ENCODE measurements at regions of chr17 and their contacts with region 1.

Region 1: DNA sequence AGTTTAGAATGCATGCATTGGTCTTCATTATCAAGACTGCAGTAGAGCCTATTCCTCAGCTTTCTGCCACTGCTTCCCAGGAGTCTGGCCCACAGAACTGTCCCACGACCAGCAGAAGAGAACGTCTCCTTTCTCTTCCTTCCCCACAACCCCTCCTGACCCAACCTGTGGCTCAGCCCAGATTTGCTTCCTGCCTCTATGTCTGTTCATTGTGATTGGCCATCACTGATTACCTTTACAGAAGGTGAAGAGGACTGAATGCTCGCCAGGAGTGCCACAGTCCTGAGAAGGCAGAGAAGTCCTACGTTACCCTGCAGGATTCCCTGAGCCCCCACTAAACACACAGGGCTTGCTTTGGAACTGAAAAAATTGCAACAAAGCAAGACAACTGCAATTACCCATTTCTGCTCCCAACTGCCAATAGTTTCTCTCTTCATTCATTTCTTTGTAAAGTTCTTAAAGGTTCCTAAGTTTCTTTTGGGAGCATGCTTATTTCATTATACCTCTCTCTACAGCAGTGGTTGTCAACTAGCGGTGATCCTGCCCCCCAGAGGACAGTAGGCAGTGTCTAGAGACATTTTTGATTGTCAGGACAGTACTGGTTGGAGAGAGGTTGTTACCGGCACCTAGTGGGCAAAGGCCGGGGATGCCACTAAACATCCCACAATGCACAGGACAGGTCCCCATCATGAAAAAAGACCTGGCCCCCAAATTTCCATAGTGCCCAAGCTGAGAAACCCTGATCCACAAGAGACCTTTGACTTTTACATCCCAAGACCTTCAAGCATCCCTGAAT is 4.5 kb upstream of the NAT9 start:
- DNase-seq: no peak
- H3K4me3 ChIP-seq: no peak overlapping the region
- H3K27ac ChIP-seq: no peak overlapping the region
- H3K4me1 ChIP-seq: peaks cover 13% of the 10 kb centered on the region
- H3K27me3 ChIP-seq: no peaks in the 10 kb centered on the region
- CTCF ChIP-seq: no peak
- POLR2A ChIP-seq: no peak

Region 2: GRCh38 chr17:74748529-74749365 is 31.9 kb before region 1 on chr17 and contains the start of gene NHERF1:
- intact Hi-C with region 1: loop called (anchors 5 kb)
- DNase-seq: no peak
- H3K4me3 ChIP-seq: peak within 1 kb of the TSS; percentile 62 to 98
- H3K27ac ChIP-seq: peak within 1 kb of the TSS; percentile 86
- H3K4me1 ChIP-seq: peaks cover 67% of the 10 kb centered on the region
- H3K27me3 ChIP-seq: no peaks in the 10 kb centered on the region
- CTCF ChIP-seq: no peak
- POLR2A ChIP-seq: peak in 1 of 2 donors; percentile 93
- total RNA-seq, gene NHERF1: 57.2 TPM

Region 3: GRCh38 chr17:74795327-74796020 is 14.8 kb after region 1 on chr17:
- intact Hi-C with region 1: no loop called
- DNase-seq: no peak
- H3K4me3 ChIP-seq: no peak overlapping the region
- H3K27ac ChIP-seq: no peak overlapping the region
- H3K4me1 ChIP-seq: no peaks in the 10 kb centered on the region
- H3K27me3 ChIP-seq: no peaks in the 10 kb centered on the region
- CTCF ChIP-seq: no peak
- POLR2A ChIP-seq: no peak

Region 4: DNA sequence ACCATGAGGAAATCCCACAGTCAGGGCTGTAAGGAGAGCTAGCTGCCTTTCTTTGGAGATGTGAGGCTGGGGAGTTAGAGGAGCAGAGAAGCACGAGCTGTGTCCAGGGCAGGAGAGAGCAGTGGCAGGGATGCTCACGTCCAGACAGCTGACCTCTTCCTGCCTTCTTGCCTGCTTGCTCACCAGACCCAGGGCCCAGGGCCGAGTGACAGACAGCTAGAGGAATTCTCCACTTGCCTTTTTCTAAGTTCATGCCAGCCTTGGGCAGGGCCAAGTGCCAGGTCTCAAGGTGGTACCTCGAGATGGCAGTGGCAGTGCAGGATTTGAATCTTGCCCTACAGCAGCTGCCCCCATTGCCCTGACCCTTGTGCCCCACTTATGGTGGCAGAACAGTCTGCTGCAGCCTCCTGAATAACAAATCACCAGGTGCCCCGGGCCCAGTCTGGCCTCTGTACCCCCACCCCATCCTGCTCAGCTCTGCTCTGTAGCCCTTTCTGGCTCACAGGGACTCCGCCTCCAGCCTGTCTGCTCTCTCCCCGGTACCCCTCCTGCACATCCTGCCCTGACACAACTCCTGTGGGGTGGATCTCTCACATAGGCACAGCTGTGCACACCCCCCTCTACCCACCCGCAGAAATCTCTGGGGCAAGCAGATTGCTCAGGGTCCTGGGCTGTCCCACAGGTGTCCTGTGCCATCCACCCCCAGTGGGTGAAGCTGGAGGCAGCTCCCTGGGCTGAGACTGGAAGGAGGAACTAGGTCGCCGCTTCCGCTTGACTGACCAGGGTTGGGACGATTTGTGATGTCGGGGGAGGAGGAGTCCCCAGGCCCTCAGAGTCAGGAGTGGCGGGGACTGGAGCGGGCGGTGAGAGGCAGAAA is 53.1 kb after region 1 on chr17:
- intact Hi-C with region 1: no loop called
- DNase-seq: no peak
- H3K4me3 ChIP-seq: no peak overlapping the region
- H3K27ac ChIP-seq: no peak overlapping the region
- H3K4me1 ChIP-seq: no peaks in the 10 kb centered on the region
- H3K27me3 ChIP-seq: no peaks in the 10 kb centered on the region
- CTCF ChIP-seq: no peak
- POLR2A ChIP-seq: no peak

Region 5: DNA sequence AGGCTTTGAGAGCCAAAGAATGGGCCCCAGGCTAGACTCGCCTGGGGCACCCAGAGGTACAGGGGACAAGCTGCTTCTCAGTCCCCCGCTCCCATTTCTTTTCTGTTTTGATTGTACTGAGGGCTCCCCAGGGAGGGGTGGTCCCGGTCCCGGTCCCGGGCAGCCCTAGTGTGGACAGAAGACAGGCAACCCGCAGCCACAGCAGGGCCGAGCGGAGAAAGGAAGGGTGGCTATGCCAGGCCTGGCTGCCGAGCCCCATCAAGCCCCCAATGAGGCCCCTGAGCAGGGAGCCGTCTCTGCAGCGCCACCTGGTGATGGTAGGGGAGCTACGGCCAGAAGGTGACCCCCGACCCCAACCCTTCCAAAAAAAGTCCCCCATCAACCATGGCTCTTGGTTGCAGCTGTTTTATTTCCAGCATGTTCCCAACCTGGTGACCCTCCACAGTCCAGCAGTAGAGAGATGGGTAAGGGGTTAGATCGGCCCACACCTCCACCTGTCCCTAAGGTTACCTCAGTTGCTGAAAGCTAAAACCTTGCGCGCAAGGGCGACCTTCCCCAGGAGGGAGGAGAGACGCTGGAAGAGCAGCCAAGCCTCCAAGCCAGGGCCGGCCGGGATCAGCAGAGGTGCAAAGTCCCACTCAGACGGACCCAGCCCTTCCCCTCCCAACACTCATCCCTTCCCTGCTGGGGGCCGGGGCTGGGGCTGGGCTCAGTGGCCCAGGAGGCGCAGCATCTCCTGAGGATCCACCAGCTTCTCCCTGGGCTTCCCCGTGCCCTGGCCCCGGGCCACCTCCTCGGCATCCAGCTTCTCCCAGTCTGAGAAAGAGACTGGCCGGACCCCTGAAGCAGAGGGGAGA is 81.7 kb after region 1 on chr17:
- intact Hi-C with region 1: no loop called
- DNase-seq: no peak
- H3K4me3 ChIP-seq: peak overlapping the region; percentile 11 to 39
- H3K27ac ChIP-seq: no peak overlapping the region
- H3K4me1 ChIP-seq: peaks cover 25% of the 10 kb centered on the region
- H3K27me3 ChIP-seq: peaks cover 17% of the 10 kb centered on the region
- CTCF ChIP-seq: peak; percentile 37 to 53 (median 46)
- POLR2A ChIP-seq: no peak